ENCODE measurements at regions of chr7 and their contacts with region 1.

Region 1: DNA sequence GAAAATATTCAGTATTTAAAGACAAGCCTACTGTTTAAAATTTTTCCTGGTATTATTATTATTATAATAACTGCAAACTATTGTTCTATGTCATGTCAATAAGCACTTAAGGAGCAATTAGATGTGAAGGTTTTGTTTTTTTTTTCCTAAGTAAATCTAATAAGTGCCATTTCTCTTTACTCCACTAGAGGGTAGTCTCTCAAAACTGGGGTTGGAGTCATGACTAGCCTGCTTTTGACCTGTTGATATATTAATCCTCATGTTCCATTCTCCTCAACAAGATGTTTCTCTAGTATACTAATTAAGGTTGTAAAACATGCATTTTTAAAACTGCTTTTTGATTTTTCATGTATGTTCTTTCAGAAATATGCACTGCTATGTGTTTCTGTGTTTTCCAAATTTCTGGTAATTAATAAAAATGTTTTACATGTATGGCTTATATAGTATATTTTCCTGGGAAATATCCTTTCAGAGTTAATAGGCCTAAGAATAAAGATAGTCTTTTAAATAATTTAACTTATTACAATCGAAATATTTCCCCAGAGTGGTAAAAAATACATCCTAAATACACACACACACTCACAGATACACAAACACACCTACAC is 1.0 kb upstream of the LRRN3 start:
- DNase-seq: peak; percentile 65
- H3K4me3 ChIP-seq: no peak overlapping the region
- H3K27ac ChIP-seq: no peak overlapping the region
- H3K4me1 ChIP-seq: no peaks in the 10 kb centered on the region
- H3K27me3 ChIP-seq: no peaks in the 10 kb centered on the region

Region 2: DNA sequence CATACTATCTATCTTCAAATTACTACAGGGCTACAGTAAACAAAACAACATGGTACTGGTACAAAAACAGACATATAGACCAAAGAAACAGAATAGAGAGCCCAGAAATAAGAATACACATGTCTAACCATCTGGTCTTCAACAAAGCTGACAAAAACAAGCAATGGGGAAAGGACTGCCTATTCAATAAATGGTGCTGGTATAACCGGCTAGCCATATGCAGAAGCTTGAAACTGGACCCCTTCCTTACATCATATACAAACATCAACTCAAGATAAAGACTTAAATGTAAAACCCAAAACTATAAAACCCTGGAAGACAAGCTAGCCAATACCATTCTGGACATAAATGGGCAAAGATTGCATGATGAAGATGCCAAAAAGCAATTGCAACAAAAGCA is 1376.6 kb before region 1 on chr7:
- in situ Hi-C with region 1: no loop called
- DNase-seq: no peak
- H3K4me3 ChIP-seq: no peak overlapping the region
- H3K27ac ChIP-seq: no peak overlapping the region
- H3K4me1 ChIP-seq: no peaks in the 10 kb centered on the region
- H3K27me3 ChIP-seq: no peaks in the 10 kb centered on the region

Region 3: DNA sequence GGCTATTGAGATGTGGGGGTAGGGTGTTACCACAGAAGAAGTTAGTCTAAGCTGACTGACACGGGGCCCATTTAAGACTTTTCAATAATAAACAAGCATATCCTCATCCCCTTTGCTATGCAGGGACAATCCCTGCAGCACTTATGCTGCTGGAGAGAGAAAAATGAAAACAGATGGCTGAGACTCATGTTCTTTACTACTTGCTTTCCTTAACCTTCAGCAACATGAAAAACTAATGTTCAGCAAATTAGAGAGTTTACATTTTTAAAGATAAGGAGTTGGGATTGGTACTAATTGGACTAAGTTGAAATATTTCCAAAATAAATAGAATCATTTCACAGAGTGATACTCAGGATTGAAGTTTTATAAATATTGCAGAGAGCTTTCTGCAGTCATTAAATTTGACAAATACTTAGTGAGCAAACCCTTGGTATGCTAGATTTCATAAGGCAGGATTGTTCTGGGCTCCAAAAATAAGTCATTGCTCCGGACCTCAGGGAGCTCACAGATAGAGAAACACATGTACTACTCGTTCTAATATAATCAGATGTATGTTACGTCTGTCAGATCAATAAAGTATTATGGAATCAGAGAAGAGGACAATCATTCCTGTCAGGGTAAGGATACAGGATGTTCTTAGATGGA is 146.1 kb before region 1 on chr7:
- in situ Hi-C with region 1: no loop called
- DNase-seq: peak; percentile 40
- H3K4me3 ChIP-seq: no peak overlapping the region
- H3K27ac ChIP-seq: no peak overlapping the region
- H3K4me1 ChIP-seq: peaks cover 11% of the 10 kb centered on the region; the same call in 1 of the 2 replicates
- H3K27me3 ChIP-seq: no peaks in the 10 kb centered on the region

Region 4: DNA sequence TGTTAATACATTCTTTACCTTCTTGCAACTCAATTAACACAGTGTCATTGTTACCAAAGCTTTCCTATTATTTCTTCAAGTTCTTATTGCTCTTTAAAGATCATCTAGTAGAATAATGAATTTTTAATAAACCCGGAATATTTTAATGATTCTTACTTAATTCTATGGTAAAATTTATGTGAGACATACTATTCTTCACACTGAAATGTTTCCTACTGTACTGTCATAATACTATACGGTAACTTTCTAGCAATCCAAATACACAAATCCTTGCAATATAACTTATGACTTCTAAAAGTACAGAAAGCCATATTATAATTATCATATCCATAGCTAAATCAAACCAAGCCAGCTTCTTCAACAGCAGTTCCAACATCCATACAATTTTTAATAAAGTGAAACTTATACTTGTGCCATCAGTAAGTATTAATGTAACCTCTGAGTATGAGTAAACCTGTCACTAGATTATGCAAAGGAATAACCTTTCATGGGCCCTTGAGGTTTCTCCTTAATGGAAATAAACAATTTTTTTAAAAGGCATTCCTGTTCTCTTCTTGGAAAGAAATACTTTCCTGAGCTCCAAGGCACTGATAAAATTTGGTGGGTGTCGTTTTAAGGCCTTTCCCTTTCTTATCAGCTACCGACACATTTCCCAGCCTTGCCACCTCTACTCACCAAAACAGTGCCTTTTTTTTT is 384.9 kb after region 1 on chr7:
- in situ Hi-C with region 1: loop called (anchors 10 kb)
- DNase-seq: no peak
- H3K4me3 ChIP-seq: no peak overlapping the region
- H3K27ac ChIP-seq: no peak overlapping the region
- H3K4me1 ChIP-seq: no peaks in the 10 kb centered on the region
- H3K27me3 ChIP-seq: no peaks in the 10 kb centered on the region

Measured in GM23248 (cell line).